ENCODE measurements at regions of chr7 and their contacts with region 1.

Region 1: GRCh38 chr7:155961241-155962190 is 149.3 kb upstream of the SHH start:
- DNase-seq: no peak
- H3K4me3 Mint-ChIP-seq: no peak overlapping the region
- H3K27ac Mint-ChIP-seq: no peak overlapping the region
- H3K4me1 Mint-ChIP-seq: peaks cover 20% of the 10 kb centered on the region
- H3K27me3 Mint-ChIP-seq: peaks cover 10% of the 10 kb centered on the region

Region 2: GRCh38 chr7:155997431-155998327 is 36.2 kb after region 1 on chr7:
- intact Hi-C with region 1: loop called (anchors 1 kb)
- DNase-seq: no peak
- H3K4me3 Mint-ChIP-seq: peak overlapping the region; percentile 1
- H3K27ac Mint-ChIP-seq: no peak overlapping the region
- H3K4me1 Mint-ChIP-seq: peaks cover 29% of the 10 kb centered on the region
- H3K27me3 Mint-ChIP-seq: peaks cover 33% of the 10 kb centered on the region

Region 3: GRCh38 chr7:156198277-156198676 is 236.8 kb after region 1 on chr7:
- intact Hi-C with region 1: no loop called
- DNase-seq: no peak
- H3K4me3 Mint-ChIP-seq: no peak overlapping the region
- H3K27ac Mint-ChIP-seq: no peak overlapping the region
- H3K4me1 Mint-ChIP-seq: no peaks in the 10 kb centered on the region
- H3K27me3 Mint-ChIP-seq: peaks cover 2% of the 10 kb centered on the region